ENCODE measurements at regions of chr17 and their contacts with region 1.

Region 1: DNA sequence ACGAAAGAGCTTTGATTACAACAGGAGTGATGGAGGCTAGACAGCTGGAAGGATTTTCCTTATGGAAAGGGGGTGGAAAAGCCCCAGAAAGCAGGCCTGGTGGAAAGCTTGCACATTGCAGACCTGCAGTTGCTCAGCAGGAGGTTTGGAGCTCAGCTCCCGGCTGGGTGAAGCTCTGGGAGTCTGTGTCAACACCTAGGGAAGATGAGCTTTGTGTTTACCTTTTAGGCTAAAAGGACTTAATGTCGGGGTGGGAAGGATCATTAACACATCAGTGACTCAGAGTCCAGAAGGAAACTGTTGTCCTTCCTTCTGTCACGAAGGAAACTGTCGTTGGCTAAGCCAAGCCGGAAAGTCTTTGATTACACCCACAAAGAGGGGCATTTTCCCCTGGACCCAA is 48.2 kb downstream of the RAP1GAP2 start:
- DNase-seq: peak; percentile 76 to 96
- ATAC-seq: peak; percentile 85 to 86
- H3K4me3 ChIP-seq: no peak overlapping the region
- H3K27ac ChIP-seq: peak overlapping the region; percentile 70 to 84
- H3K4me1 ChIP-seq: peaks cover 46% of the 10 kb centered on the region
- CTCF ChIP-seq: no peak
- EP300 ChIP-seq: peak; percentile 50 to 58; a peak in 2 of 5 replicates
- POLR2A ChIP-seq: no peak
- RAD21 ChIP-seq: 0 out of 5 replicates have a peak, but pooled peaks of 1 of the 2 experiments have one; percentile 14

Region 2: DNA sequence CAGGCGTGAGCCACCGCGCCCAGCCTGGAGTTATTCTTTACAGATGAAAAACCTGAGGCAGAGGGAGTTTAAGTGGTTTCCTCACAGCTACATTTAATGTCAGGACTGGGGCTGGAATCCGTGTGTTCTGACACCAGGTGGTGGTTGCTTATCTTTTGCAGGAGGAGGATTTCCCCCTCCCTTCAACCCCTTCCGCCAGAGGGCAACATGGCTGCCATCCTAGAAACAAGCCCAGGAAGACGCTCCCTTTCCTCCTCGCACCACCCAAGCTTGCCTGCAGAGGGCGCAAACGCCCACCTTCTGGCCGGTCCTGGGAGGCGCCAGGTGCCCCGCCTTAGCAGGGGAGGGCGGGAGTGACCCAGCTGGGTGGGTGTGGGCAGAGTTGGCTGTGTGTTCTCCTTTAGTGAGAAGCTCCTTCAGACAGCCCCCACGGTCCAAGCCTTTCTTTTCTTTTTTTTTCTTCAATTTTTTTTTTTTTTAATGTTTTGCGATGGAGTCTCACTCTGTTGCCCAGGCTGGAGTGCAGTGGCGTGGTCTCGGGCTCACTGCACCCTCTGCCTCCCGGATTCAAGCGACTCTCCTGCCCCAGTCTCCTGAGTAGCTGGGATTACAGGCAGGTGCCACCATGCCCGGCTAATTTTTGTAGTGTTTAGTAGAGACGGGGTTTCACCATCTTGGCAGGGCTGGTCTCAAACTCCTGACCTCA is 58.1 kb before region 1 on chr17:
- CTCF ChIA-PET with region 1: interaction called, 29 read pairs
- POLR2A ChIA-PET with region 1: no interaction called
- DNase-seq: peak; percentile 94 to 95
- ATAC-seq: peak; percentile 89 to 97
- H3K4me3 ChIP-seq: peak overlapping the region; percentile 27
- H3K27ac ChIP-seq: peak overlapping the region; percentile 53; a peak in 4 of 6 replicates
- H3K4me1 ChIP-seq: no peaks in the 10 kb centered on the region
- CTCF ChIP-seq: peak; percentile 92
- EP300 ChIP-seq: no peak
- POLR2A ChIP-seq: no peak
- RAD21 ChIP-seq: peak; percentile 90 to 94

Region 3: DNA sequence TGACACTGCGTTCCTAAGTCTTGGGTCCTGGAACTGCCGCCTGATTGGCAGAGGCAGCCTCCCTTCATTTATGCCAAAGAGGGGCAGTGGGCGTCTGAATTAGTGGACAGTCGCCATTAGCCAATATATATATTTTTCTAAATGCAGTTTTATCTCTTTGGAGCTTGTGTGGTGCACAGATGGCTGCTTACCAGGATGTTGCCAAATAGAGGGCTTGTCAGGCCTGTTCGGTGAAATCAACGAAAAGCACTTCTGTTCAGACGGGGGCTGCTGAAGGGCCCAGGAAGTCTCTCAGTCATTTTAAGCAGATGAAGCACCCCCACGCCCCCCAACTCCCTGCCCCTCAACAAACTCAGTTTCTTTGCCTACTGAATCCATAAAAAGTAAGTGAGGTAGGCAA is 17.8 kb after region 1 on chr17:
- CTCF ChIA-PET with region 1: interaction called, 97 read pairs
- POLR2A ChIA-PET with region 1: interaction called, 3 read pairs
- DNase-seq: no peak
- ATAC-seq: no peak
- H3K4me3 ChIP-seq: no peak overlapping the region
- H3K27ac ChIP-seq: no peak overlapping the region
- H3K4me1 ChIP-seq: peaks cover 6% of the 10 kb centered on the region
- CTCF ChIP-seq: no peak
- EP300 ChIP-seq: no peak
- POLR2A ChIP-seq: no peak
- RAD21 ChIP-seq: no peak

Region 4: DNA sequence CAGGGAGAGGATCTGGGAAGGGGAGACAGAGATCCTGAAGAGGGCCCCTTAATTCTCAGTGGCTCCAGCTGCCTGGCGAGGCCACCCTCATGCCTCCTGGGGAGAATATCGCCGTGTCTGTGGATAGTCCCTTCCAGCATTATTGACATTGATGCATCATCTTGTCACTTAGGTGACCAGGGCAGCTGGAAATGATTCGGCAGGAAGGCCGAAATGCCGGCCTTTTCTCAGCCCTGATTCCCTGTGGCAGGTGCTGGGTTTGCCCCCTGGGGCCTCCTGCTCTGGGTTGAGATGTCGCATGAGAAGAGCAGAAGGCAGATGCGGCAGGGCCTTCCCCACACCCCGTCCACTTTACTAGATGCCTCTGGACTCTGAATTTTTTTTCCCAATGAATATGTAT is 41.3 kb after region 1 on chr17:
- CTCF ChIA-PET with region 1: interaction called, 25 read pairs
- POLR2A ChIA-PET with region 1: no interaction called
- DNase-seq: no peak
- ATAC-seq: no peak
- H3K4me3 ChIP-seq: no peak overlapping the region
- H3K27ac ChIP-seq: peak overlapping the region; percentile 10 to 22; a peak in 3 of 6 replicates
- H3K4me1 ChIP-seq: peaks cover 33% of the 10 kb centered on the region
- CTCF ChIP-seq: no peak
- EP300 ChIP-seq: no peak
- POLR2A ChIP-seq: no peak
- RAD21 ChIP-seq: no peak

Region 5: GRCh38 chr17:2909175-2909845 is 64.9 kb after region 1 on chr17:
- CTCF ChIA-PET with region 1: interaction called, 14 read pairs
- POLR2A ChIA-PET with region 1: no interaction called
- DNase-seq: no peak
- ATAC-seq: peak; percentile 25 to 35; a peak in 3 of 6 replicates
- H3K4me3 ChIP-seq: no peak overlapping the region
- H3K27ac ChIP-seq: no peak overlapping the region
- H3K4me1 ChIP-seq: no peaks in the 10 kb centered on the region
- CTCF ChIP-seq: no peak
- EP300 ChIP-seq: no peak
- POLR2A ChIP-seq: no peak
- RAD21 ChIP-seq: no peak

Region 6: GRCh38 chr17:2965563-2966235 is 121.3 kb after region 1 on chr17:
- CTCF ChIA-PET with region 1: interaction called, 60 read pairs
- POLR2A ChIA-PET with region 1: interaction called, 4 read pairs
- DNase-seq: peak; percentile 89 to 90
- ATAC-seq: peak; percentile 91
- H3K4me3 ChIP-seq: no peak overlapping the region
- H3K27ac ChIP-seq: peak overlapping the region; percentile 83 to 91
- H3K4me1 ChIP-seq: peaks cover 53% of the 10 kb centered on the region
- CTCF ChIP-seq: no peak
- EP300 ChIP-seq: no peak; a peak in 1 of 5 replicates
- POLR2A ChIP-seq: no peak
- RAD21 ChIP-seq: no peak

Region 7: DNA sequence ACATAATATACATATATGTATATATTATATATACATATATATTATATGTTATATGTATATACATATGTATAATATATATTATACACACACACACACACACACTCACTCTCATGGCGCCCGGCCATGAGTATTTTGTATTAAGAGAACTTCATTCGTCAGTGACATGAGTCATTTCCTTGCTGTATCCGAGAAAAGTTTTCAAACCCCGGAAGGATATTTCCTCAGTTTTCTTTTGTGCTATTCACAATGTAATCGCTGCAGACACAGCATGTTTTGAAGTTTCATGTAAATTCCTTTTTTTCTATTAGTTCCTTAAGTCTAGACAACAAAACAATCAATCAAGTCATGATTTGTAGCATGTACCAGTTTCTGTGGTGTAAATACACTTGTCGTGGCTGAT is 185.7 kb after region 1 on chr17:
- CTCF ChIA-PET with region 1: interaction called, 20 read pairs
- POLR2A ChIA-PET with region 1: no interaction called
- DNase-seq: no peak
- ATAC-seq: no peak
- H3K4me3 ChIP-seq: no peak overlapping the region
- H3K27ac ChIP-seq: no peak overlapping the region
- H3K4me1 ChIP-seq: no peaks in the 10 kb centered on the region
- CTCF ChIP-seq: no peak
- EP300 ChIP-seq: no peak
- POLR2A ChIP-seq: no peak
- RAD21 ChIP-seq: no peak